Naive thymus-derived CD4-positive, alpha-beta T cell (primary cell): ENCODE measurements at regions of chr12 and their contacts with region 1.

Region 1: DNA sequence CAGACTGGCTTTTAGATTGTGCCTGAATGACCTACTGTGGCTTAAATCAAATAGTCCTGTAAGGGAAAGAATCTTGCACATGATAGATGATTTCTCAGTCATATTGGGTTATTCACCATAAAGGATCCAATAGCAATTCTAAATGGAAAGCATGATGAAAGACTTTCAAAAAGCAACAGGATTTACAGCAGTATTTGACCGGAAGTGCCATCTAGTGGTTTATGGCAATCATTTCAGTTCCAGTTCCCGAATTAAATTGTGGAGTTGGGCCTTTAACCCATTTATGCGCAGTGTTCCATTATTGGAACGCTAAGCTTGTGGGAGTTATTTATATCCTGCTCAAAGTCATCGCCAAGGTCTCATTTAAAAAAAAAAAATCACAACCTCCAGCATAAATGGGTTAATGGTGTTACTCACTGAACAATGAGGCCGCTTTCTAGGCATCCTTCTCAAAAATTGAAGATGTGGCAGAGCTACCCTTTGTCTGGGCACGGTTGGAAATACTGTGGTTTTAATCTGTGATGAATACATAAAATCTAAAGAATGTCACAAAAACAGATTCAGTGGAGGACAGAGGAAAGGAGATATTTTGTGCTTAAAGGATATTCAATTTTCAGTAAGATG is 60.8 kb upstream of the REP15 start:
- DNase-seq: no peak
- ATAC-seq: no peak
- H3K4me3 ChIP-seq: no peak overlapping the region
- H3K4me3 Mint-ChIP-seq: no peak overlapping the region
- H3K27ac ChIP-seq: no peak overlapping the region
- H3K27ac Mint-ChIP-seq: no peak overlapping the region
- H3K4me1 ChIP-seq: no peaks in the 10 kb centered on the region
- H3K4me1 Mint-ChIP-seq: peaks cover 0 to 7% (median 0%) of the 10 kb centered on the region in 7 donors
- H3K27me3 ChIP-seq: no peaks in the 10 kb centered on the region
- H3K27me3 Mint-ChIP-seq: no peaks in the 10 kb centered on the region

Region 2: DNA sequence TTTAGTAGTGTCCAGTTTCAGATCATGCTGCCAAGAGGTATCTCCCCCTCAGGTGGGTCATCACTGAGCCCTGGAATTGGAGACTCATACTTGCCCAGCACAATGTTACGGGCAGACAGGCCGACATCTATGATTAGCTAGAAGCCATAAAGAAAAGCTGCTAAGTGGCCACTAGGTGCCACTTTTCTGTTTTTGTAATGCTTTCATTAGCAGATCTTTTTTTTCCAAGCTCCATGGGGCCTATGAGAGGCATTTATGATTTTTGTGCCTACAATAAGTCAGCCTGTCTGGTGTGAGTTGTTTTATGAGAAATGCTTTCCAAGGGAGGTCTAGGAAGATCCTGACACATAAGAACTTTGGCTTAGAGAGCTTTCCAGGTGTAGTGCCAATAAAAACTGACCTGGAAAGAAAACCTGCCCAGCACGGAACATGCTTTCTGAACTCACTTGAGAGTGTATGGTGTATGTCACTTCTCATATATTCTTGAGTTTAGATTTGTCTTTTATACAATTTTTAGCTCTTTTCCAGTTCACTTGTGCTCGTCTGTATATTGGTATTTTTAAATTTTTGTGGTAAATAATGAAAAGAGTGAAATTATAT is 210.7 kb before region 1 on chr12:
- CTCF ChIA-PET with region 1: interaction called, 5 read pairs
- POLR2A ChIA-PET with region 1: no interaction called
- intact Hi-C with region 1: loop called in 1 of 2 experiments (anchors 1 kb)
- DNase-seq: peak in 1 of 9 donors; percentile 8
- ATAC-seq: no peak
- H3K4me3 ChIP-seq: no peak overlapping the region
- H3K4me3 Mint-ChIP-seq: no peak overlapping the region
- H3K27ac ChIP-seq: no peak overlapping the region
- H3K27ac Mint-ChIP-seq: no peak overlapping the region
- H3K4me1 ChIP-seq: no peaks in the 10 kb centered on the region
- H3K4me1 Mint-ChIP-seq: peaks cover 0 to 13% (median 0%) of the 10 kb centered on the region in 7 donors
- H3K27me3 ChIP-seq: no peaks in the 10 kb centered on the region
- H3K27me3 Mint-ChIP-seq: no peaks in the 10 kb centered on the region